HAP-1 (cell line): ENCODE measurements at regions of chr7 and their contacts with region 1.

Region 1: GRCh38 chr7:124784879-124785818 is 19.6 kb upstream of the GPR37 start:
- DNase-seq: peak; percentile 72 to 76
- H3K4me3 ChIP-seq: no peak overlapping the region
- H3K4me1 ChIP-seq: no peaks in the 10 kb centered on the region
- H3K27me3 ChIP-seq: no peaks in the 10 kb centered on the region

Region 2: DNA sequence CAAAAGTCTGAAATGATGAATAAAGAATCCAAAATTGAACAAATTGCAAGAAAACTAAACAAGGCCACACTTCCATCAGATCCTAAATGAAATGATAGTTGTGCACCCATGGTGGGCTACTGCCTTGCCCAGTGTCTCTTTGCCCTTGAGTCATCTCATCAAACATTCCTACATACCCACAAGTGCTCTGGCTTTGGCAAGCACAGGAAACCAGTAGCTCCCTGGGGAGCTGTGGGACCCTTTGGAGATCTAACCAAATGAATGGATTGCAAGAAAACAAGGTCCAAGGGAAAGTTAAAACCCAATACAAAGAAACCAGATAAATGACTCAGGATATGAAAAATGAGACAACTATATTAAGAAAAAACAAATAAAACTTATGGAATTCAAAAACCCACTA is 622.5 kb before region 1 on chr7:
- in situ Hi-C with region 1: loop called (anchors 10 kb)
- DNase-seq: no peak
- H3K4me3 ChIP-seq: no peak overlapping the region
- H3K4me1 ChIP-seq: peaks cover 8% of the 10 kb centered on the region; the same call in 1 of the 2 replicates
- H3K27me3 ChIP-seq: peaks cover 6% of the 10 kb centered on the region; the same call in 1 of the 2 replicates

Region 3: GRCh38 chr7:124893140-124893827 is 108.1 kb after region 1 on chr7:
- in situ Hi-C with region 1: no loop called
- DNase-seq: no peak
- H3K4me3 ChIP-seq: no peak overlapping the region
- H3K4me1 ChIP-seq: no peaks in the 10 kb centered on the region
- H3K27me3 ChIP-seq: no peaks in the 10 kb centered on the region